ENCODE measurements at regions of chr10 and their contacts with region 1.

Region 1: GRCh38 chr10:91838199-91838598 is 40.0 kb downstream of the TNKS2 start:
- DNase-seq: no peak
- ATAC-seq: no peak
- H3K4me3 ChIP-seq: no peak overlapping the region
- H3K27ac ChIP-seq: no peak overlapping the region
- H3K4me1 ChIP-seq: no peaks in the 10 kb centered on the region
- H3K27me3 ChIP-seq: no peaks in the 10 kb centered on the region
- CTCF ChIP-seq: no peak
- POLR2A ChIP-seq: no peak

Region 2: GRCh38 chr10:90847417-90847816 is 990.8 kb before region 1 on chr10:
- in situ Hi-C with region 1: no loop called
- intact Hi-C with region 1: no loop called
- DNase-seq: no peak
- ATAC-seq: peak; percentile 49 to 63
- H3K4me3 ChIP-seq: no peak overlapping the region
- H3K27ac ChIP-seq: no peak overlapping the region
- H3K4me1 ChIP-seq: no peaks in the 10 kb centered on the region
- H3K27me3 ChIP-seq: no peaks in the 10 kb centered on the region
- CTCF ChIP-seq: no peak
- POLR2A ChIP-seq: no peak

Region 3: DNA sequence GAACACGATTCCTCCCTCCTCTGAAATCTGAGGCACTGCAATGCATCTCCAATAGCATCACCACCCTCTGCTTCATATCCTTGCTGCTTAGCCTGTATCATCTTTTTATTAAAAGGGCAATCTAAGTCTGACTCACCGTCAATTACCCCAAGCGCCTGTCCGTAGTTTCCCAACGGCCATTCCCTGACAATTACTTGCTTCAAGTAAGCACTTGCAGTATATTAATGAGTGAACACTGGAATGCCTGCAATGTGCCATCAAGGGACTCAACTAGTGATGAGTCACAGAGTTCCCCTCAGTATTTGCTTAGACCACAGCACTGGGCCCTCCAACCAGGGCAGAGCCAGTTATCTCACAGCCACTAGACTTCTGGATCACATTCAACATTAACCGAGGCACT is 185.8 kb before region 1 on chr10:
- in situ Hi-C with region 1: no loop called
- intact Hi-C with region 1: no loop called
- DNase-seq: no peak
- ATAC-seq: no peak
- H3K4me3 ChIP-seq: no peak overlapping the region
- H3K27ac ChIP-seq: no peak overlapping the region
- H3K4me1 ChIP-seq: no peaks in the 10 kb centered on the region
- H3K27me3 ChIP-seq: no peaks in the 10 kb centered on the region
- CTCF ChIP-seq: no peak
- POLR2A ChIP-seq: no peak

Region 4: DNA sequence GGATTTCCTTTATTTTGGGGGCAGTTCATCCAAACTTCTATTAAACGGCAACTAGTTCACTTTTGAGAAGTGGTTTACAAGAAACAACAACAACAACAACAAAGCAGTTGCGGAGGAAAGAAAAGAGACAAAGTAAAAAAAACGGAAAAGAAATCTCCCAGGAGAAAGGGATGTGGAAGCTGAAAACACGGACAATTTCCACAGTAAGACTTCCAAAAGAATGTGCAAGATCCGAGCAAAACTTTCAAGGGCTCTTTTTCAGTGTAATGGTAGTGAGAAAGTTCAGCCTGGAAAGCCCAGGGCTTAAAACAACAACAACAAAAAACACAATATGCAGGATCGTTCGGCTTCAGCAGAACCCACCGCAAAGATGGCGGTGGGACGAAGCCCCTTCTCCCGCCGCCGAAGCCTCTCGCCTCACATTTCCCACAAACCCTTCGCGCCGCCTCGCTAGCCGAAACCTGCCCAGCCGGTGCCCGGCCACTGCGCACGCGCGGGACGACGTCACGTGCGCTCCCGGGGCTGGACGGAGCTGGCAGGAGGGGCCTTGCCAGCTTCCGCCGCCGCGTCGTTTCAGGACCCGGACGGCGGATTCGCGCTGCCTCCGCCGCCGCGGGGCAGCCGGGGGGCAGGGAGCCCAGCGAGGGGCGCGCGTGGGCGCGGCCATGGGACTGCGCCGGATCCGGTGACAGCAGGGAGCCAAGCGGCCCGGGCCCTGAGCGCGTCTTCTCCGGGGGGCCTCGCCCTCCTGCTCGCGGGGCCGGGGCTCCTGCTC is 40.1 kb before region 1 on chr10 and contains the start of gene TNKS2:
- in situ Hi-C with region 1: no loop called
- intact Hi-C with region 1: no loop called
- DNase-seq: peak; percentile 85 to 93
- ATAC-seq: peak; percentile 67 to 77
- H3K4me3 ChIP-seq: peak within 1 kb of the TSS; percentile 72 to 93 (median 84)
- H3K27ac ChIP-seq: peak within 1 kb of the TSS; percentile 95 to 97 (median 96)
- H3K4me1 ChIP-seq: peaks cover 41 to 50% of the 10 kb centered on the region in 2 donors
- H3K27me3 ChIP-seq: no peaks in the 10 kb centered on the region
- CTCF ChIP-seq: peak in 1 of 5 experiments; percentile 13
- POLR2A ChIP-seq: peak; percentile 95 to 96
- total RNA-seq, gene TNKS2: 26.2 to 40.3 (median 29.5) TPM

Region 5: GRCh38 chr10:92024700-92025099 is 186.5 kb after region 1 on chr10:
- in situ Hi-C with region 1: loop called in 1 of 4 experiments (anchors 10 kb)
- intact Hi-C with region 1: no loop called
- DNase-seq: no peak
- ATAC-seq: no peak
- H3K4me3 ChIP-seq: no peak overlapping the region
- H3K27ac ChIP-seq: no peak overlapping the region
- H3K4me1 ChIP-seq: no peaks in the 10 kb centered on the region
- H3K27me3 ChIP-seq: no peaks in the 10 kb centered on the region
- CTCF ChIP-seq: no peak
- POLR2A ChIP-seq: no peak

Region 6: GRCh38 chr10:92470041-92470440 is 631.8 kb after region 1 on chr10:
- in situ Hi-C with region 1: loop called in 2 of 4 experiments (anchors 25 kb)
- intact Hi-C with region 1: no loop called
- DNase-seq: no peak
- ATAC-seq: no peak
- H3K4me3 ChIP-seq: no peak overlapping the region
- H3K27ac ChIP-seq: no peak overlapping the region
- H3K4me1 ChIP-seq: no peaks in the 10 kb centered on the region
- H3K27me3 ChIP-seq: no peaks in the 10 kb centered on the region
- CTCF ChIP-seq: no peak
- POLR2A ChIP-seq: no peak

Region 7: DNA sequence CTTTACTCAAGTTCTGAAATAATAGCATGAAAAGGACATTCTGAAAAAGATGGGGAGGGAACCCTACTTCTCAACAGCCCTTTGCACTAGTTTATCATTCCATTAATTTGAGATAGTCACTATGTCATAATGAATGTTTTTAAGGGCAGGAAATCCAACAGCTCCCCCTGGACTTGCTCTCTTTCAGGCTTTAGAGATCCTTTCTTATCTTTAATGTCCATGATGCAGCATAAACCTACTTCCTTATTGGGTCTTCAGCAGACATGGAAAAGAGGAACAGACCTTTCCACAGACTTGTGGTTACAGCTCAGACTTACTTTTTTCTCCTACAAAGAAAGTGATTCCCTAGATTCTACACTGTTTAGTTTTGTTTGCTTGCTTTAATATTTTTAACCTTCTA is 648.4 kb after region 1 on chr10:
- in situ Hi-C with region 1: loop called in 1 of 4 experiments (anchors 25 kb)
- intact Hi-C with region 1: no loop called
- DNase-seq: no peak
- ATAC-seq: no peak
- H3K4me3 ChIP-seq: no peak overlapping the region
- H3K27ac ChIP-seq: no peak overlapping the region
- H3K4me1 ChIP-seq: no peaks in the 10 kb centered on the region
- H3K27me3 ChIP-seq: no peaks in the 10 kb centered on the region
- CTCF ChIP-seq: no peak
- POLR2A ChIP-seq: no peak